ENCODE measurements at regions of chr4 and their contacts with region 1.

Region 1: GRCh38 chr4:173168396-173169177 is at the start of gene GALNT7:
- DNase-seq: peak; percentile 80 to 83
- H3K4me3 ChIP-seq: peak within 1 kb of the TSS; percentile 58
- H3K4me3 Mint-ChIP-seq: peak within 1 kb of the TSS; percentile 90
- H3K27ac Mint-ChIP-seq: peak within 1 kb of the TSS; percentile 85
- H3K4me1 ChIP-seq: peaks cover 8% of the 10 kb centered on the region; the same call in 1 of the 2 replicates
- H3K4me1 Mint-ChIP-seq: no peaks in the 10 kb centered on the region
- H3K27me3 ChIP-seq: no peaks in the 10 kb centered on the region
- H3K27me3 Mint-ChIP-seq: no peaks in the 10 kb centered on the region
- CTCF ChIP-seq: no peak
- total RNA-seq, gene GALNT7: 16.8 and 17.4 TPM in 2 replicates

Region 2: GRCh38 chr4:173057901-173058300 is 110.7 kb before region 1 on chr4:
- CTCF ChIA-PET with region 1: no interaction called
- POLR2A ChIA-PET with region 1: no interaction called
- intact Hi-C with region 1: no loop called
- DNase-seq: no peak
- H3K4me3 ChIP-seq: no peak overlapping the region
- H3K4me3 Mint-ChIP-seq: no peak overlapping the region
- H3K27ac Mint-ChIP-seq: no peak overlapping the region
- H3K4me1 ChIP-seq: no peaks in the 10 kb centered on the region
- H3K4me1 Mint-ChIP-seq: no peaks in the 10 kb centered on the region
- H3K27me3 ChIP-seq: no peaks in the 10 kb centered on the region
- H3K27me3 Mint-ChIP-seq: no peaks in the 10 kb centered on the region
- CTCF ChIP-seq: no peak

Region 3: GRCh38 chr4:173121076-173121561 is 47.5 kb before region 1 on chr4:
- CTCF ChIA-PET with region 1: no interaction called
- POLR2A ChIA-PET with region 1: no interaction called
- intact Hi-C with region 1: loop called (anchors 2 kb)
- DNase-seq: peak; percentile 59 to 63
- H3K4me3 ChIP-seq: no peak overlapping the region
- H3K4me3 Mint-ChIP-seq: peak overlapping the region; percentile 34
- H3K27ac Mint-ChIP-seq: peak overlapping the region; percentile 41
- H3K4me1 ChIP-seq: no peaks in the 10 kb centered on the region
- H3K4me1 Mint-ChIP-seq: peaks cover 6% of the 10 kb centered on the region
- H3K27me3 ChIP-seq: no peaks in the 10 kb centered on the region
- H3K27me3 Mint-ChIP-seq: no peaks in the 10 kb centered on the region
- CTCF ChIP-seq: no peak

Region 4: DNA sequence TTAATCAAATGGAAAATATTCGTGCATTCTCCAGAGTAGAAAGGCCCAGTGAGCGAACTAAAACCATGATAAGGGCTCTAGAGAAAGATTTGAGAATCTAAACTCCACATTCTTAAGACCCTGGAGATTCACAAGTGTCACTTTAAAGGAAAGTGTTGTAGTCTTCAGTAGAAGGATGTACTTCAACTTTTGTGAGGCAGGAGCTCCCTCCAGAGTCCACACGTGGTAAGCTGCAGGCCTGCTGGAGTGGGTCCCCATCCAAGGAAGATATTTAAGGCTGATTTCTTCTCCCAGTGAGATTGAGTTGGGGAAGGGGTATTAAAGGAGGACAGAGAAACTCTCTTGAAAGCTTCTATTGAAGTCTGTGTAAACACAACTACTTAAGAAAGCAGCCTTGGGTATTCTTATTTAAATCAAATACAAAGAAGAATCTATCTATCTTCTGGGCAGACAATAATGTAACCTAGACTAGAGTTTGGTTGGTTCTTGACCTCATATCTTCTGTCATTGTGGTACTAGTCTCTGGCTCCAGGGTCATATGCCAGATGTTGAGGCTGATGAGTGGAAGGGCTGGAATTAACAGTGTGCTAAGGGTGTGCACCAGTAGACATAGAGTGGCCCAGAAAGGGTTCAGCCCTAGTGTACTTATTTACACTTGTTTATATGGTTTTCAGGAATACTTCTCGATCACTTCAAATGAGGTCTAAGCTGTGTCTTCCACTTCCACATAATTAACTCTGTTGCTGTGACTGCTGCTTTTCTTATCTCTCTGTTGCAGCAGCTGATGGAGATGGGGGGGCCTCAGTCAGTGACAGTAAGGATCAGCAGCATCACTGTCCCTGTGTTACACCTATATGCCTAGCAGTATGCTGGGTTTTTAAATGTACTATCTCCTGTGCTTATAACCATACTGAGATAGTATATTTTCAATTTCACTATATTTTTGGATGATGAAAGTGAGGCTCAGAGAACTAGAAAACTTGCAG is 89.4 kb after region 1 on chr4:
- CTCF ChIA-PET with region 1: interaction called, 5 read pairs
- POLR2A ChIA-PET with region 1: interaction called, 9 read pairs
- intact Hi-C with region 1: loop called (anchors 1 kb)
- DNase-seq: peak; percentile 53 to 60
- H3K4me3 ChIP-seq: no peak overlapping the region
- H3K4me3 Mint-ChIP-seq: no peak overlapping the region
- H3K27ac Mint-ChIP-seq: no peak overlapping the region
- H3K4me1 ChIP-seq: no peaks in the 10 kb centered on the region
- H3K4me1 Mint-ChIP-seq: no peaks in the 10 kb centered on the region
- H3K27me3 ChIP-seq: no peaks in the 10 kb centered on the region
- H3K27me3 Mint-ChIP-seq: no peaks in the 10 kb centered on the region
- CTCF ChIP-seq: peak; percentile 68 to 72

Region 5: DNA sequence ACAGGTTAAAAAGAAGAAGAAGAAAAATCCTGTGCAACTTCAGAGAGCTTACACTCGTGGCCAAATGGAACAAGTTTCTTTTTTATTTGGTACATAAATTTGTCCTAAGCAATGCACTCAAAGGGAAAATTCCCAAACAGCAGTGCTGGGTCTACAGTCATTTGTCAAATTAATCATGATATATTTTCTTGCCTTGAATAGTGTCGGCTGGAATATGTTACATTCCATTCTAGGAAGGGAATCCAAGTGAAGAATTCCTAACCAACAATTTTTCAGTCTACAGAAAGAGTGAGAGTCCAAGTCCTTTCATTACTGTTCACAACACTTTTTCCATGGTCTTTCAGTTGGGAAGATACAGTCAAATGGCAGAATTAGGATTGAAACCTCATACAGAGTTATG is 297.5 kb after region 1 on chr4:
- CTCF ChIA-PET with region 1: no interaction called
- POLR2A ChIA-PET with region 1: no interaction called
- intact Hi-C with region 1: no loop called
- DNase-seq: no peak
- H3K4me3 ChIP-seq: no peak overlapping the region
- H3K4me3 Mint-ChIP-seq: no peak overlapping the region
- H3K27ac Mint-ChIP-seq: no peak overlapping the region
- H3K4me1 ChIP-seq: no peaks in the 10 kb centered on the region
- H3K4me1 Mint-ChIP-seq: no peaks in the 10 kb centered on the region
- H3K27me3 ChIP-seq: no peaks in the 10 kb centered on the region
- H3K27me3 Mint-ChIP-seq: peaks cover 5% of the 10 kb centered on the region
- CTCF ChIP-seq: no peak